ENCODE measurements at regions of chr2 and their contacts with region 1.

Region 1: DNA sequence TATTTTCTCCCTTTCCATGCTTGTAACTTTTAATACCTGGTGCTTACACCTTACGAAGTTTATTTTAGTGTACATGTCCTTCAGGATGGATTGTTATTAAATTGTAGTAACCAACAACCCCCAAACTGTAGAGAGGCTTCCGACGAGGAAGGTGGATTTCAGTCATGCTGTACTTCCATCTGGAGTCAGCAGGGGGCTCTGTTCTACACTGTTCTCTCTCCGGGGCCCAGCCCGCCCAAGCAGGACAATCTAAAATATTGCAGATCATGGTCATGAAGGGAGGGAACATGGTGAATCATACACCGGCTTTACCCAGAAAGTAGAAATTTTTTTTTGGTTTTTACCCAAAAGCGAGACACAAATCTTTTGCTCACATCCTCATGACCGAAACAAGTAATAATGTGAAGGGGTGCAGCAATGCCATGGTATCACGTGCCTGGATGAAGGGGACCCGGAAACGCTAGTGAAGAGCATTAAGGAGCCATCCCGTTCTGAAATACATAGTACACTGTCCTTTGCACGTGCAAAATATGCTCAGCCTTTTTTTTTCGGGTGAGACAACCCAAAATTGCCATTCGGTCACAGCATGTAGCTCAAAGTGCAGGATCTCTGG is 884.8 kb downstream of the EPHA4 start:
- DNase-seq: peak; percentile 78 to 84
- ATAC-seq: peak; percentile 86
- H3K4me3 ChIP-seq: no peak overlapping the region
- H3K27ac ChIP-seq: no peak overlapping the region
- H3K4me1 ChIP-seq: no peaks in the 10 kb centered on the region
- H3K27me3 ChIP-seq: no peaks in the 10 kb centered on the region

Region 2: DNA sequence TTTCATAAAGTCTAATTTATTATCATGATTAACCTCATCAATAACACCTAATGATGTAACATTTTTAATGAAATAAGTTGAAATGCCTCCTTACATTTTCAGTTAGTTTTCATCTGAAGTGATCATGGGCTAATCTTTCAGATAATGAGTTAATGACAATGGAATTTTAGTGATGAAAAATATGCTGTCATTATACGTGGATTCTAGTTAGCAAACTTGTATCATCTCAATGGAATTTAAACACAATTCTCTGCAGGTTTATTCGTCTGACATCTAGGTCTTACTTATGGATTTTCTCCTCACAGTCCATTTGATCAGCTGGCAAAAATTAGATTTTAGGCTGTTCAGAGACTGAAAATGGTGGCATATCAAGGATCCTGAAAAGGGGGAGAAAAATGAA is 174.9 kb before region 1 on chr2:
- intact Hi-C with region 1: no loop called
- DNase-seq: no peak
- ATAC-seq: no peak
- H3K4me3 ChIP-seq: no peak overlapping the region
- H3K27ac ChIP-seq: no peak overlapping the region
- H3K4me1 ChIP-seq: no peaks in the 10 kb centered on the region
- H3K27me3 ChIP-seq: no peaks in the 10 kb centered on the region

Region 3: GRCh38 chr2:221969087-221969829 is 1281.9 kb after region 1 on chr2:
- intact Hi-C with region 1: loop called in 1 of 2 experiments (anchors 10 kb)
- DNase-seq: no peak
- ATAC-seq: no peak
- H3K4me3 ChIP-seq: no peak overlapping the region
- H3K27ac ChIP-seq: no peak overlapping the region
- H3K4me1 ChIP-seq: no peaks in the 10 kb centered on the region
- H3K27me3 ChIP-seq: no peaks in the 10 kb centered on the region